ENCODE measurements at regions of chr17 and their contacts with region 1.

Region 1: DNA sequence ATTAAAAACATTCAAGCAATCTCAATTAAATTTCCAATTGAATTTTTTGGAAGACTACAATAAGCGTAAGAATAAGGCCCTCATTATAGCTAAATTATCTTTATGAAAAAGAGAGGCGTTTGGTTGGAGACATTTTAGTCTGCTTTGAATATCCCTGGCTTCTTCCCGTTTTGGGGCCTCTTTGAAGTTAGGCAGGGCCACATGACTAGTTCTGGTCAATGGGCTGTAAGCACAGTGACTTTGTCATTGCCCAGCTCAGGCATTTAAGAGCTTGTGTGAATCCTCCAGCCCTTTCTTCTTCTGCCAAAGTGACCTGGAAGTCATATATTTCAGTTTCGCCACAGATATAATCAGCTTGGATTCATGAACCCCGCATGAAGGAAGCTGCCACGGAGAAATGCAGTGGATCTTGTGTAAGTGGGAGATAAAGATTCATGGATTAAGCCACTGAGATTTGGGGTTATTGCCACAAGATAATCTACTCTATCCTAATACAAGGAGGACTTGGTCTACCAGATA is 21.7 kb upstream of the UBTF start:
- DNase-seq: peak; percentile 31 to 60 (median 55)
- H3K4me3 ChIP-seq: no peak overlapping the region
- H3K4me3 Mint-ChIP-seq: no peak overlapping the region
- H3K27ac ChIP-seq: no peak overlapping the region
- H3K27ac Mint-ChIP-seq: peak overlapping the region in 3 of 7 donors; percentile 19 to 72 (median 26)
- H3K4me1 ChIP-seq: peaks cover 5 to 9% of the 10 kb centered on the region in 2 donors
- H3K4me1 Mint-ChIP-seq: peaks cover 18% of the 10 kb centered on the region
- H3K27me3 ChIP-seq: no peaks in the 10 kb centered on the region
- H3K27me3 Mint-ChIP-seq: peaks cover 0 to 9% (median 5%) of the 10 kb centered on the region in 3 donors
- CTCF ChIP-seq: no peak

Region 2: DNA sequence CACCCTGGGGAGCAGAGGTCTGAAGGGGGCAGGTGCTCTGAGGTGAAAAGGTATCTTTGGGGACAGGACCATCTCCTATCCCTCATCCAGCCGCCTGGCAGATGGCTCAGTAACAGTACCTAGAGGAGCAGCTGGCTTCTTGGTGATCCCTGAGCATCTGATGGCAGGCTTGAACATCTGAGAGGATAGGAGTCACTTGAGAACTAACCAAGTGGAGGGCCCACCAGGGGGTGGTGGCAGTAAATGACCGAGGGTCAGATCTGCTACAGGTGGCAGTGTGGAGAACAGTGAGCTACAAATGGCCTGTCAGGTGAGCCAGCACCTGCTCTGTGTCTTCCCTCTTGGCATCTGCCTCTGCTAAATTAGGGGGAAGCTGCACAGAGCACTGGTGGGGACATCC is 85.7 kb before region 1 on chr17:
- intact Hi-C with region 1: no loop called
- DNase-seq: no peak
- H3K4me3 ChIP-seq: no peak overlapping the region
- H3K4me3 Mint-ChIP-seq: no peak overlapping the region
- H3K27ac ChIP-seq: no peak overlapping the region
- H3K27ac Mint-ChIP-seq: peak overlapping the region in 2 of 7 donors; percentile 14 to 44
- H3K4me1 ChIP-seq: no peaks in the 10 kb centered on the region
- H3K4me1 Mint-ChIP-seq: peaks cover 3% of the 10 kb centered on the region
- H3K27me3 ChIP-seq: no peaks in the 10 kb centered on the region
- H3K27me3 Mint-ChIP-seq: peaks cover 0 to 2% (median 0%) of the 10 kb centered on the region in 3 donors
- CTCF ChIP-seq: no peak

Region 3: DNA sequence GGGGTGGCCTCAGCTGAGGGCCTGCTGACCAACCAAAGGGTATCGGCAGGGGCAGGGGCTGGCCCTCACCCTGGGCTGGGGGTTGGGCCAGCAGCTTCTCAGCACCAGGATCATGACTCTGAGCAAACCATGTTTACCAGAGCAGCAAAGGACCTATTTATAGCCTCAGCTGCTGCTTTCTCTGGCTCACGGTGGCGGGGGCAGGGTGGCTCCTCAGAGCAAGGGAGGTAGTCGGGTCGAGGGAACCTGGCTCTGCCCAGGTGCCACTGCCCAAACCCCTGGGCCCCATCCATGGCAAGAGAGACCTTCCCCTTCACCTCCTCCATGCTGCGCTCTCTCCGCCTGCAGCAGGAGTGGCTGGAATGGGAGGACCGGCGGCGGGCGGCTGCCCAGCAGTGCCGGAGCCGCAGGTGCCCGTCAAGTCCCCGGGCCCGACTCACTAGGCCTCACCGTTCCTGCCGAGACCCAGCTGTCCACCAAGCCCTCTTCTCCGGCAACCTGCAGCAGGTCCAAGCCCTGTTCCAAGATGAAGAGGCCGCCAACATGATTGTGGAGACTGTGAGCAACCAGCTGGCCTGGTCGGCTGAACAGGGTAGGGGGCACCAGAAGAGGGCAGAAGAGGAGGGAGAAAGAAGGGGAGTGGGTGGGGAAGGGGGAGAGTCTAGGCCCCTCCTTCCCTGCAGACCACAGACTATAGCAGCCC is 70.5 kb before region 1 on chr17 and contains the start of gene ASB16:
- intact Hi-C with region 1: no loop called
- DNase-seq: no peak
- H3K4me3 ChIP-seq: no peak within 1 kb of the TSS
- H3K4me3 Mint-ChIP-seq: peak within 1 kb of the TSS in 1 of 2 donors; percentile 36
- H3K27ac ChIP-seq: no peak within 1 kb of the TSS
- H3K27ac Mint-ChIP-seq: peak within 1 kb of the TSS in 1 of 7 donors; percentile 61
- H3K4me1 ChIP-seq: peaks cover 0 to 2% of the 10 kb centered on the region in 2 donors
- H3K4me1 Mint-ChIP-seq: peaks cover 3% of the 10 kb centered on the region
- H3K27me3 ChIP-seq: peaks cover 0 to 6% of the 10 kb centered on the region in 2 donors
- H3K27me3 Mint-ChIP-seq: peaks cover 3 to 5% (median 4%) of the 10 kb centered on the region in 3 donors
- CTCF ChIP-seq: no peak
- polyA plus RNA-seq, gene ASB16: not detected

Region 4: DNA sequence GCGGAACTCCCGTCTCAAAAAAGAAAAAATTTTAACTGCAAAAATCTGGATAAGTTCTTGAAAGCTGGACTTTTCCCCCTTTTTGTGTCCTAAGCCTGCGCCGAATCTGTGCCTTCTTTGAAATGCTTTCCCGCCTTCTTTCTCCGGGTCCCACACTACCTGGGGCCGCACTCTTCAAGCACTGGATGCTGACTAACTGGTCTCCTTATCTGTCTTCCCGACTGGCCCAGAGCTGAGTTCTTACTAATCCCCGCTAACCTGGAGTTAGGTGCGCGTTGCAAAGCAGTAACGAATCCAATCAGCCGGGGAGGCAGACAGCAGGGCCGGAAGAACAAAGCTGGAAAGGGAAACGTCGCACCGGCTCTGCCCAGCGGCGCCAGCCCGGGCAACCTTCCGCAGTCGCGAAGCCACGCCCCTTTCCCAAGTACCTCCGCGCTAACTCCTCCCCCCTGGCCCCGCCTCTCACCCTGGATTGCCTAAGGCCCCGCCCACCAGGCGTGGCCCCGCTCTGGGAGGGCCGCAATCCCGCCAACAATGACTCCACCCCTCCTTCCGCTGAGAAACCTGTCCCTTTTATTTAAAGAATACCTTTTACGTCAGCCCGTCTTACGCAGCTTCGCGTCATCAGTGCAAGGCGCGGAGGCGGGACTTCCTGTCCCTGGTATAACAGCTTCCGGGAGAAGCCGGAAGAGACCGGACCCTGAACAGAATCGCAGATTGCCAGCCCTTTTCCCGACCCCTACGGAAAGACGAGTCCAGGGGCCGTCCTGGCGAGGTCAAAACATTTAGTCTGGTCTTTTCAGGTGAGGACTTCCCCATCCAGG is 54.6 kb before region 1 on chr17 and contains the start of gene TMUB2:
- intact Hi-C with region 1: no loop called
- DNase-seq: peak; percentile 99
- H3K4me3 ChIP-seq: peak within 1 kb of the TSS; percentile 75 to 94 (median 90)
- H3K4me3 Mint-ChIP-seq: peak within 1 kb of the TSS; percentile 97 to 99
- H3K27ac ChIP-seq: peak within 1 kb of the TSS; percentile 92 to 98
- H3K27ac Mint-ChIP-seq: peak within 1 kb of the TSS; percentile 96 to 100 (median 99)
- H3K4me1 ChIP-seq: peaks cover 33 to 39% of the 10 kb centered on the region in 2 donors
- H3K4me1 Mint-ChIP-seq: peaks cover 36% of the 10 kb centered on the region
- H3K27me3 ChIP-seq: no peaks in the 10 kb centered on the region
- H3K27me3 Mint-ChIP-seq: no peaks in the 10 kb centered on the region
- CTCF ChIP-seq: no peak
- polyA plus RNA-seq, gene TMUB2: 41.3 to 118 (median 41.7) TPM

Region 5: GRCh38 chr17:44279666-44280391 is 38.7 kb after region 1 on chr17:
- intact Hi-C with region 1: loop called in 1 of 2 experiments (anchors 5 kb)
- DNase-seq: peak; percentile 94 to 98 (median 97)
- H3K4me3 ChIP-seq: peak overlapping the region in 1 of 3 experiments; percentile 46
- H3K4me3 Mint-ChIP-seq: peak overlapping the region; percentile 64 to 70
- H3K27ac ChIP-seq: peak overlapping the region; percentile 64 to 80
- H3K27ac Mint-ChIP-seq: peak overlapping the region; percentile 92 to 97 (median 94)
- H3K4me1 ChIP-seq: peaks cover 23 to 25% of the 10 kb centered on the region in 2 donors
- H3K4me1 Mint-ChIP-seq: peaks cover 30% of the 10 kb centered on the region
- H3K27me3 ChIP-seq: peaks cover 0 to 7% of the 10 kb centered on the region in 2 donors
- H3K27me3 Mint-ChIP-seq: peaks cover 24 to 33% (median 28%) of the 10 kb centered on the region in 3 donors
- CTCF ChIP-seq: no peak

Region 6: GRCh38 chr17:44363613-44364159 is 122.5 kb after region 1 on chr17 and contains the start of gene FAM171A2:
- intact Hi-C with region 1: no loop called
- DNase-seq: peak; percentile 43 to 65 (median 62)
- H3K4me3 ChIP-seq: peak within 1 kb of the TSS; percentile 35 to 76 (median 36)
- H3K4me3 Mint-ChIP-seq: peak within 1 kb of the TSS; percentile 76 to 90
- H3K27ac ChIP-seq: no peak within 1 kb of the TSS
- H3K27ac Mint-ChIP-seq: peak within 1 kb of the TSS in 2 of 7 donors; percentile 45 to 59
- H3K4me1 ChIP-seq: peaks cover 9 to 19% of the 10 kb centered on the region in 2 donors
- H3K4me1 Mint-ChIP-seq: peaks cover 6% of the 10 kb centered on the region
- H3K27me3 ChIP-seq: peaks cover 15 to 44% of the 10 kb centered on the region in 2 donors
- H3K27me3 Mint-ChIP-seq: peaks cover 50 to 72% (median 53%) of the 10 kb centered on the region in 3 donors
- CTCF ChIP-seq: peak; percentile 87
- polyA plus RNA-seq, gene FAM171A2: not detected